ENCODE measurements at regions of chr5 and their contacts with region 1.

Region 1: GRCh38 chr5:131263648-131264450 is at the start of gene CDC42SE2:
- DNase-seq: peak; percentile 88
- H3K4me3 Mint-ChIP-seq: peak within 1 kb of the TSS; percentile 89
- H3K27ac Mint-ChIP-seq: peak within 1 kb of the TSS; percentile 95
- H3K4me1 Mint-ChIP-seq: peaks cover 48% of the 10 kb centered on the region
- H3K27me3 Mint-ChIP-seq: no peaks in the 10 kb centered on the region
- total RNA-seq, gene CDC42SE2: 103 to 104 TPM

Region 2: GRCh38 chr5:131165119-131165727 is 98.6 kb before region 1 on chr5 and contains the start of gene HINT1:
- CTCF ChIA-PET with region 1: interaction called, 6 read pairs
- POLR2A ChIA-PET with region 1: interaction called, 26 read pairs
- intact Hi-C with region 1: loop called (anchors 1 kb)
- DNase-seq: peak; percentile 95
- H3K4me3 Mint-ChIP-seq: peak within 1 kb of the TSS; percentile 98
- H3K27ac Mint-ChIP-seq: peak within 1 kb of the TSS; percentile 99
- H3K4me1 Mint-ChIP-seq: peaks cover 45% of the 10 kb centered on the region
- H3K27me3 Mint-ChIP-seq: no peaks in the 10 kb centered on the region
- total RNA-seq, gene HINT1: 349 to 361 TPM

Region 3: DNA sequence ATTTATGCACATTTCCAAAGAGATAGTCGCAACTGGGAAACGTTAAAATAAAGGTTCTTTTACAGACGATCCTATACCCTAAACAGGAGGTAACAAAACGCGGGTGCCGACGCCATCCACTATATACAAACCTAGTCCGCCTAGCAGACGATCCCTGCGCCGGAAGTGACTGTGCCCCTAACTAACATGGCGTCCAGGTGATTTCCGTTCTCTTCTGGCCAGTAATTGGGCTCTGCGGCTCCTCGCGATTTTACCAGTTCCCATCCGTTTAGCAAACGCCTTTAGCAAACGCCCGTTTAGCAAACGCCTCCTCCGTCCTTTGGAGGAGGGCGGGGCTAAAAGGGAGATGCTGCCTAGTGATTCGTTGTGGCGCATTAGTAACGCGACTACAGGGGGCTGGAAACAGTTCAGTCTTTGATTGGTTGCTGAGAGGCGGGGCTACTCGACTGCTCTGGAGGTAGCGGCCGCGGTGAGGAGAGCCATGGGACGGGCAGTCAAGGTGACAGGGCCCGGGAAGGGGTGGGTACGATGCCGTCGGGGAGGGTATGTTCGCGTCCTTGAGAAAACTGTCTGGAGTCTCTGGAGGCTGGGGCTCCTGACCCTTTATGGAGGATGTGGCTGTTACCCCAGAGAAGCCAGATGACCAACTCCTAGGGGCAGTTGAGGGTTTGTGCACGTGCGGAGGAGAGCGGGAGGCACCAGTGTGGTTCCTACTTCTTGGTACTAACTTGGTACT is 93.1 kb before region 1 on chr5 and contains the start of gene LYRM7:
- CTCF ChIA-PET with region 1: interaction called, 5 read pairs
- POLR2A ChIA-PET with region 1: interaction called, 17 read pairs
- intact Hi-C with region 1: loop called (anchors 1 kb)
- DNase-seq: peak; percentile 98
- H3K4me3 Mint-ChIP-seq: peak within 1 kb of the TSS; percentile 97
- H3K27ac Mint-ChIP-seq: peak within 1 kb of the TSS; percentile 92
- H3K4me1 Mint-ChIP-seq: peaks cover 37% of the 10 kb centered on the region
- H3K27me3 Mint-ChIP-seq: no peaks in the 10 kb centered on the region
- total RNA-seq, gene LYRM7: 16.6 to 18.6 TPM

Region 4: DNA sequence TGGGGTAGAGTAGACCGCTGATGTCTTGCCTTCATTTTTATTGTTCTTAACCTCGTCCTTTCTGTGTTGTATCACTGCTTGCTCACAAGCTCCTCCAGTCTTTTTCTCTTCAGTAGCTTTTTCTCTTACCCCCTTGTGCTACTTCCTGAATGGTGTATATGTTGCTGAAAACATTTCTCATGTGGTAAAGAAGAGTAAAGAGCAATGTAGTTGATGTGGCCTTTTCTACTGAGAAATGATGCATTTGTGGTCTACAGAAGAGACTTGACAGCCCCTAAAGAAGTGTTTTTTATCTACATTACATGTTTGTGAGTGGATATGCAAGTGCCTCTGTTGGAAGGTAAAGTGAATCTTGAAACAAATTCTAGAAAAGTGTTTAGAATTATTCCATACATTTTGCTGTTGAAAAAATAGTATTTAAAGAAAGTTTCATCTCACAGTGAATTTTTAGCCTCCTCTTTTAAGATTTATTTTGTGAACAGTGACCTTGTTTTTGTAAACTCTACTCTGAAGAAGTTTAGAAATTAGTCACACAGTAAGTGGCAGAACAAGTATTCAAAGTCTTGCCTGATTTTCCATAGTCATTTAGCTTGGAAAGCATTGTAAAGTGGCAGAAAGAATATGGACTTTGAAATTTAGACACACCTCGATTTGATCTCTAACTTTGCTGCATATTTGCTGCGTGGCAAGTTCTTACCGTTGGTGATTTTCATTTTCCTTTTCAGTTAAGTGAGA is 17.5 kb after region 1 on chr5:
- CTCF ChIA-PET with region 1: interaction called, 10 read pairs
- POLR2A ChIA-PET with region 1: interaction called, 42 read pairs
- intact Hi-C with region 1: loop called (anchors 1 kb)
- DNase-seq: no peak
- H3K4me3 Mint-ChIP-seq: peak overlapping the region; percentile 68
- H3K27ac Mint-ChIP-seq: peak overlapping the region; percentile 98
- H3K4me1 Mint-ChIP-seq: peaks cover 86% of the 10 kb centered on the region
- H3K27me3 Mint-ChIP-seq: no peaks in the 10 kb centered on the region

Region 5: GRCh38 chr5:131289738-131290137 is 25.9 kb after region 1 on chr5:
- CTCF ChIA-PET with region 1: interaction called, 7 read pairs
- POLR2A ChIA-PET with region 1: interaction called, 18 read pairs
- intact Hi-C with region 1: loop called (anchors 1 kb)
- DNase-seq: peak; percentile 62
- H3K4me3 Mint-ChIP-seq: peak overlapping the region; percentile 75
- H3K27ac Mint-ChIP-seq: peak overlapping the region; percentile 97
- H3K4me1 Mint-ChIP-seq: peaks cover 69% of the 10 kb centered on the region
- H3K27me3 Mint-ChIP-seq: no peaks in the 10 kb centered on the region

Region 6: DNA sequence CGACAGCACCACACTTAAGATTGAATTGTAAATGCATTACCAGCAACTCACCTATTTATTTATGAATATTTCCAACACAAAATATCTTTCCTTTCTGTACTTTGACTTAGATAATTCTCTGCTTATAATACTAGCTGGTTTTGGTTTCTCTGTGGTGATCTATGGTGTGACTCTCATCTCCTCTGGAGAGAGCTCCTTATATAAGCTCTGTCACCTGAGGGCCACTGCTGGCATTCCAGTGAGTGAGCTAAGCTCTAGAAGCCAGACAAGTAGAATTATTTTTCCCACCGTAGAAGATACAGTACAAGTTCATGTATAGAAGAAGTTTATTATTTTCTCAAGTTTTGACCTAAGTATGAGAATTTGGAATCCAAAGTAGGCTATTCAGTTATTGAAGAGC is 111.5 kb after region 1 on chr5:
- CTCF ChIA-PET with region 1: interaction called, 7 read pairs
- POLR2A ChIA-PET with region 1: interaction called, 27 read pairs
- intact Hi-C with region 1: loop called (anchors 1 kb)
- DNase-seq: no peak
- H3K4me3 Mint-ChIP-seq: peak overlapping the region; percentile 24
- H3K27ac Mint-ChIP-seq: peak overlapping the region; percentile 91
- H3K4me1 Mint-ChIP-seq: peaks cover 88% of the 10 kb centered on the region
- H3K27me3 Mint-ChIP-seq: no peaks in the 10 kb centered on the region